CD8-positive, alpha-beta T cell (primary cell): ENCODE measurements at regions of chr9 and their contacts with region 1.

Region 1: DNA sequence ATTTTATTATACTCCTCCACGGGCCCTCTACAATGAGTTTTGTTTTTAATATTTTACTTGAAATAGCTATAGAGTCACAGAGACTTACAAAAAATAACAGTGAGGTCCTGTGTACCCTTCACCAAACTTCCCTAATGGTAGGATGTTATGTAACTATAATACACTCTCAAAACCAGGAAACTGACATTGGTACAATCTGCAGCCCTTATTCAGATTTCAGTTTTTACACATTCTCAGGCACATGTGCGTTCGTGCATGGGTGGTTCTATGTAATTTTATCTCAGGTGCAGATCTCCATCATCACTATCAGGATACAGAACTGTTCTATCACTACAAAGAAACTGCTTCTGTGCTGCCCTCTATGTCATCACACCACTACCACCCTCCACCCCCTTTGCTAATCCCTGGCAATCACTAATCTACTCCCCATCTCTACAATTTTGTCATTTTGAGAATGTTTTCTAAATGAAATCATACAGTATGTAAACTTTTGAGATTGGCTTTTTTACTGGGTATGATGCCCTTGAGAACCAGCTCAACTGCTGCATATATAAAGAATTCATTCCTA is 16.4 kb downstream of the RAB14 start:
- DNase-seq: no peak
- ATAC-seq: peak; percentile 31
- H3K4me3 ChIP-seq: no peak overlapping the region
- H3K4me3 Mint-ChIP-seq: no peak overlapping the region
- H3K27ac ChIP-seq: peak overlapping the region in 1 of 2 experiments; percentile 14
- H3K27ac Mint-ChIP-seq: peak overlapping the region; percentile 83
- H3K4me1 ChIP-seq: peaks cover 39% of the 10 kb centered on the region
- H3K4me1 Mint-ChIP-seq: peaks cover 76% of the 10 kb centered on the region
- H3K27me3 ChIP-seq: no peaks in the 10 kb centered on the region
- H3K27me3 Mint-ChIP-seq: no peaks in the 10 kb centered on the region
- CTCF ChIP-seq: no peak

Region 2: DNA sequence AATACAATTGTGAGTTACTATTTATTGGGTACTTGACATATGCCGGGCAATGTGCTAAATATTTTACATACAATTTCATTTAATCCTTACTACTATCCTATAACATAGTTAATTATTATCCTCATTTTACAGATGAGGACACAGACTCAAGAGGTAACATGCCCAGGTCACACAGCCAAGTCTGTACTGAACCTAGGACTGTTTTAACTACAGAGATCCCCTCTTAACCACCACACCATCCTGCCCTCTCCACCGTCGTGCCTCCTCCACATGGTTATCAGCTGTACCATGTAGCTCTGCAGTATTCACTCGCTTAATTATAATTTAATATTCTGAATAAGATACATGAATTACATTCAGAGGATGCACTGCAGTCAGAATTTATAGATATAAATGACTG is 11.1 kb after region 1 on chr9:
- CTCF ChIA-PET with region 1: no interaction called
- POLR2A ChIA-PET with region 1: interaction called, 9 read pairs
- intact Hi-C with region 1: loop called in 1 of 2 experiments (anchors 1 kb)
- DNase-seq: peak in 1 of 9 experiments; percentile 35
- ATAC-seq: no peak
- H3K4me3 ChIP-seq: no peak overlapping the region
- H3K4me3 Mint-ChIP-seq: peak overlapping the region; percentile 48
- H3K27ac ChIP-seq: no peak overlapping the region
- H3K27ac Mint-ChIP-seq: peak overlapping the region; percentile 62
- H3K4me1 ChIP-seq: peaks cover 87% of the 10 kb centered on the region
- H3K4me1 Mint-ChIP-seq: peaks cover 86% of the 10 kb centered on the region
- H3K27me3 ChIP-seq: no peaks in the 10 kb centered on the region
- H3K27me3 Mint-ChIP-seq: no peaks in the 10 kb centered on the region
- CTCF ChIP-seq: no peak